MCF 10A (cell line): ENCODE measurements at regions of chr15 and their contacts with region 1.

Region 1: GRCh38 chr15:38683382-38684242 is 119.0 kb upstream of the RASGRP1 start:
- DNase-seq: peak; percentile 54
- H3K4me3 Mint-ChIP-seq: no peak overlapping the region
- H3K27ac Mint-ChIP-seq: no peak overlapping the region
- H3K4me1 Mint-ChIP-seq: peaks cover under 1% of the 10 kb centered on the region
- H3K27me3 Mint-ChIP-seq: no peaks in the 10 kb centered on the region
- CTCF ChIP-seq: peak; percentile 76

Region 2: DNA sequence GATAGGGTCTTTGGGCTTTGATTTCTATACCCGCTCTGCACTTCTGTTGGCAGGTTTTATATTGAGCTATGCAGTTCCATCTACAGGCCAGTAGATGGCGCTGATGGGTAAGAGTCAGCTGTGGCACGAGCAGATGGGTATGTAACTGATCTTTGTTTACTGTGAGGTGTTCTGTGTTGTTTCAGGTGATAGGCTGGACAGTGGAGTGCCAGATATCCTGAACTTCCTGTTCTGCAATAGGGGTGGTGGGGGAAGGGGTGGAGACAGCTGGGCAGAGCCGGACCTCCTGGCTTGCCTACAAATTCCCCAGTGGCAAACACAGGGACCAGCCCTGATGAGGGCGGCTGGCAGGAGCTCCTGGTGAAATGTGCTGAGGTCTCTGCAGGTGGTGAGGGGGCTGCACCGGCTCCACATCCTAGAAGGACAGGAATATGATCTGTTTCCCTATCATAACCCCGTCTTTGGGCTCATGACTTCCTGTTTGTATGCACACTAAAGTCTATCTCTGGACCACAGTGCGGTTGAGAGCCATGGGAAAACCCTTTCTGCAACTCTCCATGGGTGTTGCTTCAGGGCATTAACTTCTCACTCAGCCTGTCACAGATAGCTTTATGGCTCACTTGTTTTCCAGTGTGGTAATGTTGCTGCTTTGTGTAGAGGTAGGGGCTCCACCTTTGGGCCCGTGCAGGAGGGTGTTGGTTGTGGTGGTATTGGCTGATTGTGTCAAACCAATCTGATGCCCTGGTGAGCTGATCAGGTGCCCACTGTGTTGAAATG is 243.1 kb before region 1 on chr15:
- CTCF ChIA-PET with region 1: interaction called, 78 read pairs
- POLR2A ChIA-PET with region 1: no interaction called
- intact Hi-C with region 1: loop called (anchors 1 kb)
- DNase-seq: peak; percentile 71
- H3K4me3 Mint-ChIP-seq: no peak overlapping the region
- H3K27ac Mint-ChIP-seq: no peak overlapping the region
- H3K4me1 Mint-ChIP-seq: peaks cover 6% of the 10 kb centered on the region
- H3K27me3 Mint-ChIP-seq: peaks cover 47% of the 10 kb centered on the region
- CTCF ChIP-seq: peak; percentile 89

Region 3: GRCh38 chr15:38474155-38474757 is 209.4 kb before region 1 on chr15:
- CTCF ChIA-PET with region 1: interaction called, 34 read pairs
- POLR2A ChIA-PET with region 1: interaction called, 3 read pairs
- intact Hi-C with region 1: loop called (anchors 1 kb)
- DNase-seq: peak; percentile 61
- H3K4me3 Mint-ChIP-seq: no peak overlapping the region
- H3K27ac Mint-ChIP-seq: no peak overlapping the region
- H3K4me1 Mint-ChIP-seq: peaks cover 6% of the 10 kb centered on the region
- H3K27me3 Mint-ChIP-seq: no peaks in the 10 kb centered on the region
- CTCF ChIP-seq: peak; percentile 63

Region 4: GRCh38 chr15:38535491-38536200 is 148.0 kb before region 1 on chr15:
- CTCF ChIA-PET with region 1: interaction called, 10 read pairs
- POLR2A ChIA-PET with region 1: no interaction called
- intact Hi-C with region 1: no loop called
- DNase-seq: no peak
- H3K4me3 Mint-ChIP-seq: no peak overlapping the region
- H3K27ac Mint-ChIP-seq: no peak overlapping the region
- H3K4me1 Mint-ChIP-seq: peaks cover 19% of the 10 kb centered on the region
- H3K27me3 Mint-ChIP-seq: no peaks in the 10 kb centered on the region
- CTCF ChIP-seq: no peak

Region 5: GRCh38 chr15:38647683-38648082 is 35.9 kb before region 1 on chr15:
- CTCF ChIA-PET with region 1: interaction called, 16 read pairs
- POLR2A ChIA-PET with region 1: no interaction called
- intact Hi-C with region 1: no loop called
- DNase-seq: peak; percentile 58
- H3K4me3 Mint-ChIP-seq: no peak overlapping the region
- H3K27ac Mint-ChIP-seq: no peak overlapping the region
- H3K4me1 Mint-ChIP-seq: no peaks in the 10 kb centered on the region
- H3K27me3 Mint-ChIP-seq: no peaks in the 10 kb centered on the region
- CTCF ChIP-seq: peak; percentile 61

Region 6: DNA sequence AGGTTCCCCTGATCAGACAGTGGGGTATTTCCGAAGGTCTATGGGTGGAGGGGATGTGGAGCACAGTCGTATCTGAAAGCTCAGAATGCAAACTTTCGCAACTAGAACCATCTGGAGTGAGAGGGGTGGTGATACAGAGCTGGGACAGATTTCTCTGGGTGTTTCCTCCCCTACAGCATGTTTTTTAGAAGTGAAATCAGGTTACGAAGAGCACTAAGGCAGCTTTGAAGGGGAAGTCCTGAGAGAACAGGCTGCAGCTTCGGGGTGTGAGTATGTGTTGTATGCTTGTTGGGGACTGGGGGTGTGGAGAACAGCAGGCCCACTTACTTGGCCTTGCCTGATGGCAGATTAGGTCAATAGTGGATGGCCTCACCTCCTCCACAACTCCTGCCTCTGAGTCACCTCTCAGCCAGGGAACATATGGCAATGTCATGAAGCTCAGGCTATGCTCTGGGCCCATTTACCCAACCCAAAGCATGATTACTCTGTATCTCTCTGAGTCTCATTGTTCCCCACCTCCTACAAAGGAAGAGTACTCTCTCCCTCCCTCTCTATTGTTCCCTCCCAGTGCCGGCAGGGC is 11.8 kb before region 1 on chr15:
- CTCF ChIA-PET with region 1: interaction called, 33 read pairs
- POLR2A ChIA-PET with region 1: no interaction called
- intact Hi-C with region 1: no loop called
- DNase-seq: no peak
- H3K4me3 Mint-ChIP-seq: no peak overlapping the region
- H3K27ac Mint-ChIP-seq: no peak overlapping the region
- H3K4me1 Mint-ChIP-seq: no peaks in the 10 kb centered on the region
- H3K27me3 Mint-ChIP-seq: peaks cover 14% of the 10 kb centered on the region
- CTCF ChIP-seq: no peak